H1 (cell line): ENCODE measurements at regions of chr2 and their contacts with region 1.

Region 1: GRCh38 chr2:72325592-72326422 is 178.1 kb upstream of the CYP26B1 start:
- DNase-seq: peak; percentile 13 to 86
- H3K4me3 ChIP-seq: no peak overlapping the region
- H3K27ac ChIP-seq: no peak overlapping the region
- H3K4me1 ChIP-seq: no peaks in the 10 kb centered on the region
- H3K27me3 ChIP-seq: no peaks in the 10 kb centered on the region
- CTCF ChIP-seq: peak; percentile 39 to 83 (median 76)
- EP300 ChIP-seq: no peak
- POLR2A ChIP-seq: no peak
- RAD21 ChIP-seq: peak; percentile 70 to 79

Region 2: GRCh38 chr2:72051971-72052505 is 273.8 kb before region 1 on chr2:
- CTCF ChIA-PET with region 1: no interaction called
- POLR2A ChIA-PET with region 1: no interaction called
- DNase-seq: no peak
- H3K4me3 ChIP-seq: no peak overlapping the region
- H3K27ac ChIP-seq: no peak overlapping the region
- H3K4me1 ChIP-seq: no peaks in the 10 kb centered on the region
- H3K27me3 ChIP-seq: no peaks in the 10 kb centered on the region
- CTCF ChIP-seq: no peak
- EP300 ChIP-seq: no peak
- POLR2A ChIP-seq: no peak
- RAD21 ChIP-seq: no peak

Region 3: DNA sequence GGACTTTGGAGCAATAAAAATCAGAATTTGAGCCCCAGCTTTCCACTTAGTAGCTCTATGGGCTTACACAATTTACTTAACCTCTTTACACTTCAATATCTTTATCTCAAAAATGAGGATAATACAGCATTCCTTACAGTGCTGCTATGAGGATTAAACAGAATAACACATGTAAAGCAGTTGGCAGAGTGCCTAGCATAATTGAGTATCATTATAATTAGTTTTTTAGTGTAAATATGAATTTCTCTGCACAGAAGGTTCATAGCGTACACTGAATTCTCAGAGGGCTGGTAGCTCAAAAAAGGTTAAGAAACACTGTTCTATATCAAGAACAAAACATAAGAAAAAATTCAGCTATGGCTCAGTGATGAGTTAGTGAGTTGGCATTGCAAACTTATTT is 12.3 kb after region 1 on chr2:
- CTCF ChIA-PET with region 1: interaction called, 22 read pairs
- POLR2A ChIA-PET with region 1: no interaction called
- DNase-seq: no peak
- H3K4me3 ChIP-seq: no peak overlapping the region
- H3K27ac ChIP-seq: no peak overlapping the region
- H3K4me1 ChIP-seq: no peaks in the 10 kb centered on the region
- H3K27me3 ChIP-seq: no peaks in the 10 kb centered on the region
- CTCF ChIP-seq: no peak
- EP300 ChIP-seq: no peak
- POLR2A ChIP-seq: no peak
- RAD21 ChIP-seq: no peak

Region 4: DNA sequence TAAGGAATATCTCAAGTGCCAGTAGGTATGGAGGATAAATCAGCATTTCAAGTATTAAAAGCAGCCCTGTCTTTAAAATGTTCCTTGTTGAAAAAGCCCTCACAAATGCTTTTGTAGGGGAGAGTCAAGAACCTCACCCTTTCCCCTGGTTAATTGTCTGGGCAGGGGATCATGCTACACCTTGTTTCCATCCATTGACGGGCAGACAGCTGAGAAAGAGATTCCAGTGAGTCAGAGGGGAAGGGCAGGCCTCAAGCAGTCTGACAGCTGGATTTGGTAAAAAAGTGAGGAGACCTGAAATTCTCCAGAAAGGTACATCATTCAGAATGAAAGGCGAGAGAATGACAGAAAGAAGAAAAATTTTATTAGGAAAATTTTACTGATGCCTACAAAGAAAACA is 25.0 kb after region 1 on chr2:
- CTCF ChIA-PET with region 1: interaction called, 10 read pairs
- POLR2A ChIA-PET with region 1: no interaction called
- DNase-seq: no peak
- H3K4me3 ChIP-seq: no peak overlapping the region
- H3K27ac ChIP-seq: no peak overlapping the region
- H3K4me1 ChIP-seq: peaks cover 0 to 4% (median 1%) of the 10 kb centered on the region in 4 experiments; a peak in 2 of 7 replicates
- H3K27me3 ChIP-seq: no peaks in the 10 kb centered on the region
- CTCF ChIP-seq: no peak
- EP300 ChIP-seq: no peak
- POLR2A ChIP-seq: no peak
- RAD21 ChIP-seq: no peak